Cardiac septum (tissue), 1 donor: ENCODE measurements at regions of chr11 and their contacts with region 1.

Region 1: DNA sequence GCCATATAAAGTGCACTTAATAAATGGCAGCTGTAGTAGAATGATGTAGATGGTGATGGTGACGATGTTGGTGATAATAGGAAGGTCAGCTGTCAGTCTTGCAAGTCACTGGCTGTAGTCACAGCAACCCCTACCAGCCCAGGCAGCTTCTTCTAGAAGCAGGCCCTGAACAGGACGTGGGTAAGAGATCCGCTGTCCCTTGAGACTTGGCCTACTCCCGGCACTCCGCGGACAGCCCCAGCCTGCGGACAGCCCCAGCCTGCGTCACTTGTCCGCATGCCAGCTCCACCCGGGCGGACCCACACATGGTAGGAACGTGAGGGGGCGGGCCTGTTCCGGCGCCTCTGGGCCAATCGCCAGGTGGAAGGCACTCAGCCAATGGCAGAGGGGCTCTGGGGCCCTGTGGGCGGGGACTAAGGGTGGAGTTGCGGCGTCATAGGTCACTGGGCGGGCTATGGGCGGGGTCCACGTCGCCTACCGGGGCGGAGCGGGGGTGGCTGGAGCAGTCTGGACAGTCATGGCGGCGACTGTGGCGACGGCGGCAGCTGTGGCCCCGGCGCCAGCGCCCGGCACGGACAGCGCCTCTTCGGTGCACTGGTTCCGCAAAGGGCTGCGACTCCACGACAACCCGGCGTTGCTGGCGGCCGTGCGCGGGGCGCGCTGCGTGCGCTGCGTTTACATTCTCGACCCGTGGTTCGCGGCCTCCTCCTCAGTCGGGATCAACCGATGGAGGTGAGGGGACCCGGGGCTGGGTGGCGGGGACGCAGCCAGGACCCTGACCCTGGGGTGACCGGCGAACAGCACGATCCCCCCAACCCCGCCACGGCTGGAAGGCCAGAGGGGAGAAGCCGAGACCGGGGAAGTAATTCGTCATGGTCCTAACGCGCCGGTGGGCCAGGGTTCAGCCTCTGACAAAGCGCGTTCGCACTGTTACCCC is at the start of gene CRY2:
- DNase-seq: peak; percentile 100
- total RNA-seq, gene CRY2: 49.6 TPM

Region 2: DNA sequence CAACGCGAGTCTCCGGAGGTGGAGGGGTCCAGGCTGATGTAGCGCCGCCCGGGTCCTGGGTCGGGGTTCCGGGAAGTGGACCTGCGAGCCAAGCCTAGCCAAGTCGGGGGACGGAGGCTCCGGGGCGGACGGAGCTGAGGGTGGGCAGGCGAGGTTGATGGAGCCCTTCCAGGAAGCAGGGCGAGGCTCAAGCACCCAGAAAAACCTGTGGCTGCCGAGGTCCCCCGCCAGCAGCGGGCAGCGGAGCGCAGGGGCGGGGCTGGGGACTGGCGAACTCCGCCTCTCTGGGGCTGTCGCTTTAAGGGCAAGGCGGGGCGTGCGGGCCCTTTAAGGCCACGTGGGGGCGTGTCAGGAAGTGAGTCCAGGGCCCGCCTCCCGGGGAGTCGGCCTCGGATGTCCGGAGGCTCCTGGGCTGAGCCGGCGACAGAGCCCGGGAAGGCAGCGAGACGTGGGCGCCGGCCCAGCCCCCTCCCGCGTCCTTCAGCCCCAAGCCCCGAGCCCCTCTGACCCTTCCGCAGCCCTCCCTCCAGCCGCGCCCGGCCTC is 42.4 kb before region 1 on chr11 and contains the start of gene SLC35C1:
- intact Hi-C with region 1: loop called (anchors 2 kb)
- DNase-seq: peak; percentile 99
- total RNA-seq, gene SLC35C1: 7.5 TPM

Region 3: GRCh38 chr11:45834298-45834756 is 12.9 kb before region 1 on chr11:
- intact Hi-C with region 1: no loop called
- DNase-seq: no peak

Region 4: GRCh38 chr11:45917623-45918330 is 70.5 kb after region 1 on chr11 and contains the start of gene PEX16:
- intact Hi-C with region 1: loop called (anchors 1 kb)
- DNase-seq: peak; percentile 98
- total RNA-seq, gene PEX16: 13.0 TPM

Region 5: GRCh38 chr11:45964911-45965389 is 117.7 kb after region 1 on chr11:
- intact Hi-C with region 1: no loop called
- DNase-seq: peak; percentile 77

Region 6: DNA sequence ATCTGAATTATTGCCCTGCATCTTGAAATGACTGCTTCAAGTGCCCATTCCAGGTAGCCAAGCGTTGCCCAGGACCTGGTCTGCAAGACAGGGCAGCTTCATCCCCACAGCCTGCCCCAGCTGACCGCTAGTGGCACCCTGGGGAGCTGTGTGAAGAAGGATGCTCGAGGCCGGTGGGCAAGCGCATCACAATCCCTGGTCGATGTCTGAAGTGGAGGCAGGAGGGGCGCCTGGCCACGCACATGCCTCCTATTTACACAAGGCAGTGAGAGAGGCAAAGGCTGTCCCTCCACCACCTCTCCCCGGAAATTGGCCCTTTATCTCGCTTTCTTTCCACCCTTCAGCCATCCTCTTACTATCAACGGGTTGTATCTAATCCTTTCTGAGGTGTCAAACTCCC is 302.1 kb after region 1 on chr11:
- intact Hi-C with region 1: no loop called
- DNase-seq: no peak